Posterior vena cava (tissue), 2 donors: ENCODE measurements at regions of chr17 and their contacts with region 1.

Region 1: DNA sequence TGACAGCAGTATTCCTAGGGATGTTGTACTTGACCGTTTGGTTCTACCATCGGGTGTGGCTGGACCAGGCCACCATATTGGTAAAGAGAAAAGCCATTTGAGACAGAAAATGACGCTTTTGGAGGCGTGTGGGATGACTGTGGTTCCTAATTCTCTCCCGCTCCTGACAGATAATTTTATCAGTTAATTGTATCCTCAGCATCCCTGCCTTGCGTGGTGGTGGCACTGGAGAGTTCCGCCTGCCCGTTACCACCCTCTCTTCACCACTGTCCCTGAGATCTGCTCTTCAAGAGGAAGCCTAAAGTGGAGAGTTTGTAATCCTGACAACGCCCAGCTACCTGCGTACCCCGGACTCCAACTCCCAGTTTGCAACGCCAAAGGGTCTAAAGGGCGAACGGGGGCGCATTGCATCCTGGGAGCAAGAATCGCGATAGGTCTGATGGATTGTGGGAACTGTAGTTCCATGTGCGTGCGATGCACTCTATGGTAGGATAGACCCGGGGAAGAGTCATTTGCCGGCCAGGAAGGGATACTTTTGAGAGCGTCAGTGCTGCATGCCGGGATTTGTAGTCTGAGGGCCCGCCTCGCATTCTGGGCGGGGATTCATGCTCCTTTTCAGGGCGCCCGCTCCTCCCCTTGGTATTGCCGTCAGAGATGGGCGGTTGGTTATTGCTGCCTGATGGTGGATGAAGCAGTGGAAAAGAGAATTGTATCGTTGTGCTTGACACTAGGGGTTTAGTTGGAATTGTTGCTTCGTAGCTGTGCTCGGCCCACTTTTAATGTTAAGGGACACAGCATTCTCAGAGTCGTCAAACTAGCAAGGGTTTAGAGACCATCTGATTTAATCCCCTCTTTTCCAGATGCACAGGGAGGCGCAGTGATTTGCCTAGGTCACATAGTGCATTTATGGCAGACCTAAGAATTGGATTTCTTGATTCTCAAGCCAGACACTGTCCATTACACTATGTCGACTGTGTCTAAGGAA is 965 bp upstream of the PHF12 start:
- DNase-seq: peak; percentile 98

Region 2: DNA sequence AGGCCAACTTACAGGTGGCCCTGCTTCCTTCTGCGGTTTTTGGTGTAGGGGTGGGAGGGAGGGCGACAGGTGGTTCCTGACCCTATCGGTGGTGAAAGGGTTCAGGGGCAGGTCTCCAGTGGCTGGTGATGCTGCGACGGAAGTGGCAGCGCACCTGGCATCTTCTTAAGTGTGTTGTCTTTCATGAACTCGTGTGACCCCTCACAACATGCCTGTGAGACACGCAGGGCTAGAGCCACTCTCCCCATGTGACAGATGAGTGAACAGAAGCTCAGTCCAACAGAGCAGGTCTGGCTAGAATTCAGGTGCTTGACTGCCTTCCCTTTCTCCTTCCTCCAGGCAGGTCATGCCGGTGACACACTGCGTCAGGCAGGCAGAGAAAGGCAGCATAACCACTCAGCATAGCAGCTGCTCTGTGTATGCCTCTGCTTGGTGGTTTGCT is 608.8 kb before region 1 on chr17:
- intact Hi-C with region 1: loop called in 1 of 2 experiments (anchors 5 kb)
- DNase-seq: peak; percentile 36

Region 3: GRCh38 chr17:28908640-28909167 is 43.6 kb before region 1 on chr17:
- intact Hi-C with region 1: loop called in 1 of 2 experiments (anchors 5 kb)
- DNase-seq: no peak